ENCODE measurements at regions of chr7 and their contacts with region 1.

Region 1: DNA sequence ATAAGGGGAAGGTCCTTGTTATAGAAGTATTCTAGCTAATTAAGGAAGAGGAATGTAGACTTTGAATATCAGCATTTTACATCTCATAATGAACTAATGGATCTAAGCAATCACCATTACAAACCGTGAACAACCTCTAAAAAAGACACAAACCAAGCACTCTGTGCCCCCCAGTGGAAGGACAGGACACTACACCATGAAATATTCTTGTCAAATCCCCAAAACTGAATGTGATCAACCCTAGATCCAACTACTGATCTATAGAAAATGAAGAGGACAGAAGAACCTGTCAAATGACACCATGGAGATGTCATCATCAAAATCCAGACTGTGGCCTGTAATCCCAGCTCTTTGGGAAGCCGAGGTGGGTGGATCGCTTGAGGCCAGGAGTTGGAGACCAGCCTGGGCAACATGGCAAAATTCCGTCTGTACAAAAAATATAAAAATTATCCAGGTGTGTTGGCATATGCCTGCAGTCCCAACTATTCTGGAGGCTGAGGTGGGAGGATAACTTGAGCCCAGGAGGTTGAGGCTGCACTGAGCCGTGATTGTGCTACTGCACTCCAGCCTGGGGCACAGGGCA is 111.3 kb upstream of the CARD11 start:
- DNase-seq: peak; percentile 33 to 66 (median 53)
- H3K4me3 ChIP-seq: no peak overlapping the region
- H3K4me3 Mint-ChIP-seq: no peak overlapping the region
- H3K27ac ChIP-seq: no peak overlapping the region
- H3K27ac Mint-ChIP-seq: no peak overlapping the region
- H3K4me1 ChIP-seq: no peaks in the 10 kb centered on the region
- H3K4me1 Mint-ChIP-seq: peaks cover 0 to 12% (median 11%) of the 10 kb centered on the region in 3 donors
- H3K27me3 ChIP-seq: no peaks in the 10 kb centered on the region
- H3K27me3 Mint-ChIP-seq: peaks cover 0 to 6% of the 10 kb centered on the region in 2 donors

Region 2: GRCh38 chr7:2863461-2864066 is 291.4 kb before region 1 on chr7:
- CTCF ChIA-PET with region 1: interaction called, 20 read pairs
- POLR2A ChIA-PET with region 1: no interaction called
- DNase-seq: peak; percentile 24 to 82 (median 61)
- H3K4me3 ChIP-seq: peak overlapping the region; percentile 32
- H3K4me3 Mint-ChIP-seq: peak overlapping the region; percentile 37 to 89 (median 67)
- H3K27ac ChIP-seq: peak overlapping the region; percentile 43
- H3K27ac Mint-ChIP-seq: peak overlapping the region; percentile 59 to 97 (median 89)
- H3K4me1 ChIP-seq: peaks cover 23% of the 10 kb centered on the region
- H3K4me1 Mint-ChIP-seq: peaks cover 26 to 28% (median 27%) of the 10 kb centered on the region in 3 donors
- H3K27me3 ChIP-seq: no peaks in the 10 kb centered on the region
- H3K27me3 Mint-ChIP-seq: peaks cover 0 to 2% of the 10 kb centered on the region in 2 donors

Region 3: DNA sequence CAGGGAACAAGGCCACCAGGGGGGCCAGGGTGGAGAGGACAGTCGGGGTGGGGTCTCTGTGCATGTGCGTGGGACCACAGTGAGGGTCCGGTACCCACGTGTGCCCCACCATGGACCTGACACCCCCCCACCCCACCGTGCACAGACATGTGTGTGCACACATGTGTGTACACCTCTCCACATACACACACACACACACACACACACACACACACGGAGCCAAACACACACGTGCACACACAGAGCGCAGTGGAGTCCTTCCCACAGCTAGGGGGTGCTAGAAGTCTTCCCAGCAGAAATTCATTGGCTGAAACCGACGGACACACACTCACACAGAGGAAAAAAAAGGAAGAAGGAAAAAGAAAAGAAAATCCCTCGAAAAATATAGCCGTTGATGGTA is 268.1 kb before region 1 on chr7:
- CTCF ChIA-PET with region 1: interaction called, 22 read pairs
- POLR2A ChIA-PET with region 1: no interaction called
- DNase-seq: peak; percentile 26 to 71 (median 44)
- H3K4me3 ChIP-seq: no peak overlapping the region
- H3K4me3 Mint-ChIP-seq: no peak overlapping the region
- H3K27ac ChIP-seq: no peak overlapping the region
- H3K27ac Mint-ChIP-seq: peak overlapping the region in 2 of 8 donors; percentile 1 to 11
- H3K4me1 ChIP-seq: peaks cover 4% of the 10 kb centered on the region
- H3K4me1 Mint-ChIP-seq: peaks cover 4 to 6% (median 5%) of the 10 kb centered on the region in 3 donors
- H3K27me3 ChIP-seq: no peaks in the 10 kb centered on the region
- H3K27me3 Mint-ChIP-seq: no peaks in the 10 kb centered on the region

Region 4: DNA sequence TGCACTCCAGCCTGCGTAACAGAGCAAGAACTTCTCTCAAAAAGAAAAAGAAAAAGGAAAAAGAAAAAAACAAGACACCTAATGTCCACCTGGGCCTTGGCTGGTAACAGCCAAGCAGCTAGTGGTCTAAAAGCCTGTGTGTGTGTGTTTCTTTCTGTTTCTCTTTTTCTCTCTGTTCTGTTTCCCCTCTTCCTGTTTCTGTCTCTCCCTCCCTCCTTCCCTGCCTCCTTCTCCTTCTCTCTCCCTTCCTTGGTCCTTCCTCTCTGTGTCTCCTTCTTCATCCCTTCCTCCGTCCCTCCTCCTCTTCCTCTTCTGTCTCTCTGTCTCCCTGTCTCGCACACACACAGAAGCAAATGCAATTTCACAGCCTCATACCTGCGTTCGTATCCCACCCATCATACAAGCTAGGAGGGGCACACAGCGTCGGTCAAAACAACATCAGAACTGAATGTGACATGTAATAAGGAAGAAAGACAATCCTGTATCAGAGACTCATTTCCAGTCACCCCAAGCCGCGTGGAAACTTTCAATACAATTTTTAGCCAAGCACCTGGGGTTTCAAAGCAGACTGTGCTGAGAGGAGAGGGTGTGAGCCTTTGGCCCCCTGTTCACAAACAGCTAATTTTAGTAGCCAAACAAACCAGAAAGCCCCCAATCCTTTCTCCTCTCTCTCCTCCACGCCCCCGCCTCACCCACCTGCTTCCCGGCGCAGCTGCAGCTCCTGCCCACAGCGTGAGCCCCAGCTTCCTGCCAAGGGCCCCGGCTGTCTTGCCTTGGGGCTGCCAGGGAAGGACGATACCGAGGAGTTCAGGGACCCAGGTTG is 260.7 kb before region 1 on chr7:
- CTCF ChIA-PET with region 1: interaction called, 12 read pairs
- POLR2A ChIA-PET with region 1: no interaction called
- DNase-seq: peak; percentile 25 to 61 (median 38)
- H3K4me3 ChIP-seq: peak overlapping the region; percentile 67
- H3K4me3 Mint-ChIP-seq: peak overlapping the region; percentile 84 to 92 (median 89)
- H3K27ac ChIP-seq: peak overlapping the region; percentile 12
- H3K27ac Mint-ChIP-seq: peak overlapping the region; percentile 35 to 94 (median 82)
- H3K4me1 ChIP-seq: peaks cover 17% of the 10 kb centered on the region
- H3K4me1 Mint-ChIP-seq: peaks cover 22 to 29% (median 22%) of the 10 kb centered on the region in 3 donors
- H3K27me3 ChIP-seq: no peaks in the 10 kb centered on the region
- H3K27me3 Mint-ChIP-seq: no peaks in the 10 kb centered on the region

Region 5: DNA sequence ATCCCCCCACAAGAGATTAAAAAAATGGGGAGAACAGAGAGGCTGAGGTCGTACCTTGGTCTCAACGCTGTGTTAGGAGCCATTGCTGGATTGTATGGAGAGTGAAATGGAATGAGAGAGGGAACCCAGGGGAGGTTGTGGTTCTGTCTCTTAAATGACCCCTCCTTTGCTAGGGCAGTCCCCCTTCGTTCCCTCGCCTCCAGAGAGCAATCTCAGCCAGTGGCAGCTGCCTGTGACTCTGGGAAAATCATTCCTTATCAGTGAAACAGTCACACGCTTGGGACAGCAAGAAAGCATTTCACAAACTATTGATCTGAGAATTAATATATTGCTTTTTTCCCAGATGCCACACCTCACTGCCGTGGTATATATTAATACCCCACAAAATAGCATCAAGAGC is 99.4 kb before region 1 on chr7:
- CTCF ChIA-PET with region 1: no interaction called
- POLR2A ChIA-PET with region 1: no interaction called
- DNase-seq: no peak
- H3K4me3 ChIP-seq: no peak overlapping the region
- H3K4me3 Mint-ChIP-seq: no peak overlapping the region
- H3K27ac ChIP-seq: no peak overlapping the region
- H3K27ac Mint-ChIP-seq: no peak overlapping the region
- H3K4me1 ChIP-seq: no peaks in the 10 kb centered on the region
- H3K4me1 Mint-ChIP-seq: no peaks in the 10 kb centered on the region
- H3K27me3 ChIP-seq: no peaks in the 10 kb centered on the region
- H3K27me3 Mint-ChIP-seq: no peaks in the 10 kb centered on the region

Region 6: DNA sequence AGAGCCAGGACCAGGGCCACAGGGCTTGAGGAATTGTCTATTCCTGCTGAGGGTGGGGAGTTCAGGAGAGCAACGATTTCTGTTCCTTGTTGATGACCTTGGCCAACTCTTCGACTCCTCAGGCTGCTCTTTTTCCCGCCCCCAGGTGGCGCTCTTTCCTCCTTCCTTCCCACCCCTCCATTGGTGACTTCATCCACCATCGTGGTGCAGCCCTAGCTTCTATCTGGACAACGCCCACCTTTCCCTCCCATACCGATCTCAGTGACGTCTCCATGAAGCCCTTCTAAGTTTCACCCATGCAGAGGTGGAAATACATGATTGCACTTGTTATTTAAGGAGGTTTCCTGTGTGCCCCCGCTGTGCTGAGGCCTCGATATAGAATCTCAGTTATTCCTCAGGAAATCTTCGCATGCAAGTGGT is 89.3 kb before region 1 on chr7:
- CTCF ChIA-PET with region 1: interaction called, 40 read pairs
- POLR2A ChIA-PET with region 1: interaction called, 4 read pairs
- DNase-seq: peak; percentile 47 to 72 (median 55)
- H3K4me3 ChIP-seq: no peak overlapping the region
- H3K4me3 Mint-ChIP-seq: peak overlapping the region; percentile 54 to 91 (median 69)
- H3K27ac ChIP-seq: no peak overlapping the region
- H3K27ac Mint-ChIP-seq: peak overlapping the region; percentile 67 to 98 (median 90)
- H3K4me1 ChIP-seq: peaks cover 78% of the 10 kb centered on the region
- H3K4me1 Mint-ChIP-seq: peaks cover 75 to 87% (median 83%) of the 10 kb centered on the region in 3 donors
- H3K27me3 ChIP-seq: no peaks in the 10 kb centered on the region
- H3K27me3 Mint-ChIP-seq: no peaks in the 10 kb centered on the region

Region 7: DNA sequence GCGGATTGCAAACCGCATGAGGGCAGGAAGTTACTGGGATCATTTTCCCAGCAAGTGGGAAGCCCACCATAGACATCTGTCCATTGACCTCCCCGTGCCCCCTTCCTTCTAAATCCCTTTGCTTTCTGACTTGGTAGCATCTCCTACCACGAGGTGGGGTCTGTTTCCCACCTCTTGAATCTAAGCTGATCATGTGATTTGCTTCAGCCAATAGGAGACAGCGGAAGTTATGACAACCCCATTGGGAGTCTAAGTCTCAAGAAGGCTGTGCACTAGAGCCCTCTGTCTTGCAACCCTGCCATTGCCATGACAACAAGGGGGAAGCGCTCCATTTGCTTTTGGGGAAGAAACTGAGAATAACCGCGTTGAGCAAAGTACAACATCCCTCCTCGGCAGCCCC is 72.2 kb before region 1 on chr7:
- CTCF ChIA-PET with region 1: interaction called, 10 read pairs
- POLR2A ChIA-PET with region 1: no interaction called
- DNase-seq: no peak
- H3K4me3 ChIP-seq: no peak overlapping the region
- H3K4me3 Mint-ChIP-seq: no peak overlapping the region
- H3K27ac ChIP-seq: no peak overlapping the region
- H3K27ac Mint-ChIP-seq: peak overlapping the region in 1 of 8 donors; percentile 14
- H3K4me1 ChIP-seq: no peaks in the 10 kb centered on the region
- H3K4me1 Mint-ChIP-seq: peaks cover 3 to 12% (median 5%) of the 10 kb centered on the region in 3 donors
- H3K27me3 ChIP-seq: no peaks in the 10 kb centered on the region
- H3K27me3 Mint-ChIP-seq: peaks cover 0 to 7% of the 10 kb centered on the region in 2 donors

Region 8: DNA sequence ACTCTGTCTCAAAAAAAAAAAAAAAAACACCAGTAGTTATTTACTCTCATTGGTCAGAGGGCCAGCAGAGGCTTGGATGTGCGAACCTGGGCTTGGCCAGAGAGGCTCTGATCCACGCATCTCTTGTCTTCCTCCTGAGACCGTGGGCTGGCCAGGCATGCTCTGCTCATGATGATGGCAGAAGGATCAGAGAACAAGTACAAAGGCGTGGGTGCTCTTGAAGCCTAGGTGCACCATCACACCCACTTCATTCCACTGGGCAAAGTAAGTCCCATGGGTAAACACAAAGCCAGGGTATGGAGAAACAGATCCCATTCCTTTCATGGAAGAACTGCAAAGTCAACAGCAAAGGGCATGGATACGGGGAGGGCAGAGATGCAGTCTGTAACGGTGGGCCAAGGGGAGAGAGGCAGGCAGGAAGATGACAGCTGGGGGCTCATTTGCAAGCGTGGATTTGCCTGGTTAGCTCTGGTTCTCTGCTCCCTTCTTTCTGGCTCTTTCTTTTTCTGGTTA is 17.8 kb after region 1 on chr7:
- CTCF ChIA-PET with region 1: no interaction called
- POLR2A ChIA-PET with region 1: no interaction called
- DNase-seq: no peak
- H3K4me3 ChIP-seq: no peak overlapping the region
- H3K4me3 Mint-ChIP-seq: no peak overlapping the region
- H3K27ac ChIP-seq: no peak overlapping the region
- H3K27ac Mint-ChIP-seq: no peak overlapping the region
- H3K4me1 ChIP-seq: no peaks in the 10 kb centered on the region
- H3K4me1 Mint-ChIP-seq: no peaks in the 10 kb centered on the region
- H3K27me3 ChIP-seq: no peaks in the 10 kb centered on the region
- H3K27me3 Mint-ChIP-seq: peaks cover 19 to 57% of the 10 kb centered on the region in 2 donors